ENCODE measurements at regions of chr7 and their contacts with region 1.

Region 1: GRCh38 chr7:5193880-5194279 is 3.8 kb downstream of the WIPI2 start:
- DNase-seq: no peak
- ATAC-seq: no peak
- H3K4me3 ChIP-seq: no peak overlapping the region
- H3K4me3 Mint-ChIP-seq: no peak overlapping the region
- H3K27ac ChIP-seq: no peak overlapping the region
- H3K27ac Mint-ChIP-seq: no peak overlapping the region
- H3K4me1 ChIP-seq: peaks cover 12 to 23% of the 10 kb centered on the region in 2 experiments
- H3K4me1 Mint-ChIP-seq: peaks cover 37 to 46% (median 45%) of the 10 kb centered on the region in 3 donors
- H3K27me3 ChIP-seq: no peaks in the 10 kb centered on the region
- H3K27me3 Mint-ChIP-seq: no peaks in the 10 kb centered on the region

Region 2: DNA sequence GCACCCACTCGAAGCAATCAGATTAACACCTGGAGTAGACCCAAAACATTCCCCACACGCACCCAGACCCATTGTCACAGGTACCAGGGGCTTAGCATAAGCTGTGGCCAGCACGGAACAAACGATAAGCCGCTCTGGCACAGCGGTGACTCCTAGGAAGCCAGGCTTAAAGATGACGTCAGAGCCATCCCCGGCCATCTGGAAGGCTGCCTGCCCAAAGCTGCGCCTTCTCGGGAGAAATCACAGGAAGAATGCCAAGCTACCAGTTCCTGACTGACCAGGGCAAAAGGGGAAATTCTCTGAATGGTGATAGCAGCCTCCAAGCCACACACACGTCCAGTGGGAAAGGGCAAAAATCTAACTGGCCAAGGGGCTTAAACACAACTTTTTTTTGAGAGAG is 16.8 kb before region 1 on chr7:
- CTCF ChIA-PET with region 1: interaction called in 1 of 2 experiments, 3 read pairs
- POLR2A ChIA-PET with region 1: interaction called in 1 of 2 experiments, 10 read pairs
- DNase-seq: no peak
- ATAC-seq: no peak
- H3K4me3 ChIP-seq: no peak overlapping the region
- H3K4me3 Mint-ChIP-seq: no peak overlapping the region
- H3K27ac ChIP-seq: no peak overlapping the region
- H3K27ac Mint-ChIP-seq: no peak overlapping the region
- H3K4me1 ChIP-seq: peaks cover 0 to 5% of the 10 kb centered on the region in 2 experiments
- H3K4me1 Mint-ChIP-seq: peaks cover 0 to 8% (median 0%) of the 10 kb centered on the region in 3 donors
- H3K27me3 ChIP-seq: peaks cover 0 to 11% of the 10 kb centered on the region in 2 experiments
- H3K27me3 Mint-ChIP-seq: no peaks in the 10 kb centered on the region